ENCODE measurements at regions of chr10 and their contacts with region 1.

Region 1: GRCh38 chr10:119542988-119543813 is 682 bp upstream of the RGS10 start:
- DNase-seq: peak; percentile 61
- ATAC-seq: peak; percentile 53
- H3K4me3 Mint-ChIP-seq: peak overlapping the region; percentile 91
- H3K27ac Mint-ChIP-seq: peak overlapping the region; percentile 87
- H3K4me1 Mint-ChIP-seq: peaks cover 38% of the 10 kb centered on the region
- H3K27me3 Mint-ChIP-seq: peaks cover 9% of the 10 kb centered on the region
- CTCF ChIP-seq: no peak

Region 2: DNA sequence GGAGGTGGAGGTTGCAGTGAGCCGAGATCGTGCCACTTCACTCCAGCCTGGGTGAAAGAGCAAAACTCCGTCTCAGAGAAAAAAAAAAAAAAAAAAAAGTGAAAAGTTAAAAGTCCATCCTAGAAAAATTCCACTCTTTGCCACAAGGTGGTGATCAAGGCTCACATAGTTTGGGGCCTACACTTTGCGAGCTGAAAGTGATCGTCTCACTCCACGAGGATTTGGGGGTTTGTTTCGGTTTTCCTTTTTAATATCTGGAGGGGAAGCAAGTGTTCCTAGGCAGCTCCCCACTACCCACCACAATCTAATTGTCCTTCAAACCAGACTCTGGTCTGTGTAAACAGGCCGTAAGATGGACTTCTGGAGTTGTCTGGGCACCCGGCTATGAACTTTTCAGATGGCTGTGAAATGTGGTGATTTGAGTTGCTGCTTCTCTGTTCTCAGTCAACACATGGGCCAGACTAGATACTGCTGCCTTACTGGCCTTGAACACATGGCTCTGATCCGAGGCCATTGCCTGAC is 974.8 kb before region 1 on chr10:
- CTCF ChIA-PET with region 1: no interaction called
- POLR2A ChIA-PET with region 1: no interaction called
- intact Hi-C with region 1: loop called (anchors 5 kb)
- DNase-seq: no peak
- ATAC-seq: peak; percentile 40
- H3K4me3 Mint-ChIP-seq: no peak overlapping the region
- H3K27ac Mint-ChIP-seq: no peak overlapping the region
- H3K4me1 Mint-ChIP-seq: peaks cover 2% of the 10 kb centered on the region
- H3K27me3 Mint-ChIP-seq: peaks cover 13% of the 10 kb centered on the region
- CTCF ChIP-seq: peak; percentile 50

Region 3: GRCh38 chr10:119199231-119199992 is 343.8 kb before region 1 on chr10:
- CTCF ChIA-PET with region 1: interaction called, 36 read pairs
- POLR2A ChIA-PET with region 1: interaction called, 5 read pairs
- intact Hi-C with region 1: loop called (anchors 1 kb)
- DNase-seq: no peak
- ATAC-seq: peak; percentile 88
- H3K4me3 Mint-ChIP-seq: no peak overlapping the region
- H3K27ac Mint-ChIP-seq: no peak overlapping the region
- H3K4me1 Mint-ChIP-seq: peaks cover 3% of the 10 kb centered on the region
- H3K27me3 Mint-ChIP-seq: peaks cover 3% of the 10 kb centered on the region
- CTCF ChIP-seq: no peak

Region 4: DNA sequence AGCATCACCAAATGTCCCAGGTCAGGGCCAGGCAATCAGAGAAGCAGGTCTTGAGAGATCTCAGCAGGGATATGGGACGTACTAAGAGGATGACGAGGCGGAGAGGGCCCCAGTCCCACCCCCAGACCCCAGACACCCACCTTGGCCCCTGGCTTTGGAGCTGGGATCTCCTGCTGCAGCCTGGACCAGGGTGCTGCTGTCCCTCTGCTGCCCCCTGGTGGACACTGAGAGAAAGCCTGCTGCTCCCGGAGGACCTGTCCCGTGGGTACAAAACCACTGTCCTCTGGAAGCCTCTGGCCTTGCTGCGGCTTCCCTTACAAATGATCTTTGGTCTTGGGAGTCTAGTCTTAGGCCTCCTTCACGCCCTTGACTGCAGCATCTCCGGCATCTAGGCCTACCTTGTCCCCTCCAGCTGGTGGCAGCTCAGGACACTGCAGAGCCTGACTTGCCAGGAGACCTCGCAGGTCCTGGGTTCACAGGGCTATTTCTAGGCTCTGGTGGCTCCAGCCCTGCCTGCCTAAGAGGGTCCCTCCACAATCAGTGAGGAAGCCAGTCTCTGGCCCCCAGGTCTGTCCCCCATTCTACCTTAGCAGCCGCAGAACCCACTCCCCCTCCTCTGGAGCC is 97.8 kb before region 1 on chr10:
- CTCF ChIA-PET with region 1: interaction called, 20 read pairs
- POLR2A ChIA-PET with region 1: interaction called, 6 read pairs
- intact Hi-C with region 1: loop called (anchors 1 kb)
- DNase-seq: peak; percentile 74
- ATAC-seq: peak; percentile 70
- H3K4me3 Mint-ChIP-seq: no peak overlapping the region
- H3K27ac Mint-ChIP-seq: peak overlapping the region; percentile 61
- H3K4me1 Mint-ChIP-seq: peaks cover 31% of the 10 kb centered on the region
- H3K27me3 Mint-ChIP-seq: no peaks in the 10 kb centered on the region
- CTCF ChIP-seq: peak; percentile 57

Region 5: GRCh38 chr10:119489991-119490326 is 53.2 kb before region 1 on chr10:
- CTCF ChIA-PET with region 1: interaction called, 7 read pairs
- POLR2A ChIA-PET with region 1: interaction called, 3 read pairs
- intact Hi-C with region 1: loop called (anchors 1 kb)
- DNase-seq: no peak
- ATAC-seq: no peak
- H3K4me3 Mint-ChIP-seq: peak overlapping the region; percentile 86
- H3K27ac Mint-ChIP-seq: peak overlapping the region; percentile 86
- H3K4me1 Mint-ChIP-seq: peaks cover 15% of the 10 kb centered on the region
- H3K27me3 Mint-ChIP-seq: no peaks in the 10 kb centered on the region
- CTCF ChIP-seq: no peak

Region 6: DNA sequence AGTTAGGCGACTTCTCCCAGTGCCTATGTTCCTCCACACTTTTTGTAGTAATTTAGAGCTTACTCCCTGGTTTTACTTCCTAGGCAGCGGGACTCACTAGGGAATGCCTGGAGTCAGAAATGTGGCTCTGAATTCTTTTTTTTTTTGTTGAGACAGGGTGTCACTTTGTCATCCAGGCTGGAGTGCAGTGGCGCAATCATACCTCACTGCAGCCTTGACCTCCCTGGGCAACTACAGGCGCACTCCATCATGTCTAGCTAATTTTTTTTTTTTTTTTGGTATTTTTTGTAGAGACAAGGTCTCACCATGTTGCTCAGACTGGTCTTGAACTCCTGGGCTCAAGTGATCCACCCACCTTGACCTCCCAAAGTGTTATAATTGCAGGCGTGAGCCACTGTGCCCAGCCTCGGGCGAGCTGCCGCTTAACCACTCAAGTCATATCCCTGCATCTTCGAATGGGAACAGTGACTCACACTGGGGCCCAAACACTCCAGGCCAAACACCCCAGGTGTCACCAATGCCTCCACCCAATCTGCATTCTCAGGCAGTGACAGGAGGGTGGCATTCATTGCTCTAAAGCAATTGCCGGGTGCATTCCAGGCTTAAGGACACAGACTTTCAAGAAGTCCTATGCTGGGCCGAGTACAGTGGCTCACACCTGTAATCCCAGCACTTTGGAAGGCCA is 20.3 kb before region 1 on chr10:
- CTCF ChIA-PET with region 1: interaction called, 14 read pairs
- POLR2A ChIA-PET with region 1: interaction called, 36 read pairs
- intact Hi-C with region 1: no loop called
- DNase-seq: no peak
- ATAC-seq: no peak
- H3K4me3 Mint-ChIP-seq: no peak overlapping the region
- H3K27ac Mint-ChIP-seq: no peak overlapping the region
- H3K4me1 Mint-ChIP-seq: peaks cover 13% of the 10 kb centered on the region
- H3K27me3 Mint-ChIP-seq: no peaks in the 10 kb centered on the region
- CTCF ChIP-seq: no peak

Region 7: GRCh38 chr10:119859420-119860258 is 316.4 kb after region 1 on chr10:
- CTCF ChIA-PET with region 1: no interaction called
- POLR2A ChIA-PET with region 1: interaction called, 4 read pairs
- intact Hi-C with region 1: loop called (anchors 1 kb)
- DNase-seq: no peak
- ATAC-seq: peak; percentile 50
- H3K4me3 Mint-ChIP-seq: no peak overlapping the region
- H3K27ac Mint-ChIP-seq: no peak overlapping the region
- H3K4me1 Mint-ChIP-seq: peaks cover 30% of the 10 kb centered on the region
- H3K27me3 Mint-ChIP-seq: no peaks in the 10 kb centered on the region
- CTCF ChIP-seq: peak; percentile 46

Measured in activated B cell treated with CpG ODN at 0.5 μM for 24 hours (primary cell).